ENCODE measurements at regions of chr5 and their contacts with region 1.

Region 1: GRCh38 chr5:179060116-179061008 is at the start of gene ZNF354C:
- DNase-seq: peak; percentile 49 to 61 (median 59)
- H3K4me3 ChIP-seq: peak within 1 kb of the TSS; percentile 55 to 87 (median 75)
- H3K4me3 Mint-ChIP-seq: peak within 1 kb of the TSS; percentile 93
- H3K27ac ChIP-seq: peak within 1 kb of the TSS in 1 of 2 donors; percentile 32
- H3K27ac Mint-ChIP-seq: peak within 1 kb of the TSS in 5 of 7 donors; percentile 20 to 63 (median 51)
- H3K4me1 ChIP-seq: peaks cover 6 to 8% of the 10 kb centered on the region in 2 donors
- H3K4me1 Mint-ChIP-seq: peaks cover 11% of the 10 kb centered on the region
- H3K27me3 ChIP-seq: no peaks in the 10 kb centered on the region
- H3K27me3 Mint-ChIP-seq: peaks cover 3 to 6% (median 3%) of the 10 kb centered on the region in 3 donors
- CTCF ChIP-seq: no peak
- polyA plus RNA-seq, gene ZNF354C: 0.25 to 0.48 (median 0.31) TPM

Region 2: GRCh38 chr5:178958774-178959173 is 101.6 kb before region 1 on chr5:
- intact Hi-C with region 1: loop called in 1 of 2 experiments (anchors 10 kb)
- DNase-seq: no peak
- H3K4me3 ChIP-seq: no peak overlapping the region
- H3K4me3 Mint-ChIP-seq: no peak overlapping the region
- H3K27ac ChIP-seq: no peak overlapping the region
- H3K27ac Mint-ChIP-seq: no peak overlapping the region
- H3K4me1 ChIP-seq: no peaks in the 10 kb centered on the region
- H3K4me1 Mint-ChIP-seq: no peaks in the 10 kb centered on the region
- H3K27me3 ChIP-seq: no peaks in the 10 kb centered on the region
- H3K27me3 Mint-ChIP-seq: no peaks in the 10 kb centered on the region
- CTCF ChIP-seq: no peak

Region 3: GRCh38 chr5:179112469-179113142 is 52.2 kb after region 1 on chr5:
- intact Hi-C with region 1: no loop called
- DNase-seq: no peak
- H3K4me3 ChIP-seq: no peak overlapping the region
- H3K4me3 Mint-ChIP-seq: no peak overlapping the region
- H3K27ac ChIP-seq: no peak overlapping the region
- H3K27ac Mint-ChIP-seq: no peak overlapping the region
- H3K4me1 ChIP-seq: no peaks in the 10 kb centered on the region
- H3K4me1 Mint-ChIP-seq: no peaks in the 10 kb centered on the region
- H3K27me3 ChIP-seq: no peaks in the 10 kb centered on the region
- H3K27me3 Mint-ChIP-seq: peaks cover 0 to 2% (median 2%) of the 10 kb centered on the region in 3 donors
- CTCF ChIP-seq: no peak

Measured in CD14-positive monocyte (primary cell).